ENCODE measurements at regions of chr2 and their contacts with region 1.

Region 1: GRCh38 chr2:218395797-218396687 is 3.6 kb upstream of the CTDSP1 start:
- DNase-seq: peak; percentile 91 to 98 (median 96)
- ATAC-seq: peak; percentile 83
- H3K4me3 ChIP-seq: peak overlapping the region; percentile 71
- H3K4me3 Mint-ChIP-seq: peak overlapping the region; percentile 85 to 99 (median 94)
- H3K27ac ChIP-seq: peak overlapping the region; percentile 86
- H3K27ac Mint-ChIP-seq: peak overlapping the region; percentile 96 to 100 (median 97)
- H3K4me1 ChIP-seq: peaks cover 29 to 31% of the 10 kb centered on the region in 2 donors
- H3K4me1 Mint-ChIP-seq: peaks cover 16 to 41% (median 39%) of the 10 kb centered on the region in 7 donors
- H3K27me3 ChIP-seq: no peaks in the 10 kb centered on the region
- H3K27me3 Mint-ChIP-seq: no peaks in the 10 kb centered on the region

Region 2: DNA sequence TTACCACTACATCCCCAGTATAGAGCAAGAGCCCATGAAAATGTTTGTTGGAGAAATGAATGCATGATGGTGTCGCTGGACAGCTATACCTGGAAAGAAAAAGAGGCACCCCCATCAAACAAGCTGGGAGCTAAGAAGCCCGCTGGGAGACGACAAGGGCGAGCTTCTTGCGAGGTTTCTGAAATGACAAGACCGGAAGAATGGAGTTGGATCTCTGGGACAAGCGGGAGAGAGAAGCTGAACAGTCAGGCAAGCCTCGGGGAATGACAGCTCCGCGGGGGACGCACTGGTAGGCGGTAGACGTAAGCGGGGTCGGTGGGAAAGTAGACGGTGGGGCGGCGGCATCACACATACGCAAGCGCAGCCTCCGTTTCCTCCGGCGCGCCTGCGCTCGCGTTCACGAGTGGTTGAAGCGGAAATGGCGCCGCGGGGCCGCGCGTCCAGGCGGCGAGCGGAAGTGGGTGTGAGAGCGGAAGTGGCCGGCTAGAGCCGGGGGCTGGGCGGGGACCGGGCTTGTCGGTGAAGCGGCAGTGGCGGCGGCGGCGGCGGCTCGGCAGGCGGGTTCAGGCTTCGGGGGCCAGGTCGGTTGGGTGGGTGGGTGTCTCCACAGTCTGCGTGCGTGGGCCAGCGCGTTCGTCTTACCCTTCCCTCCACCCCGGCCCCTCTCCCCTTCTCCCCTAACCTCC is 179.2 kb before region 1 on chr2 and contains the start of gene ARPC2:
- CTCF ChIA-PET with region 1: no interaction called
- POLR2A ChIA-PET with region 1: interaction called, 9 read pairs
- intact Hi-C with region 1: loop called (anchors 1 kb)
- DNase-seq: peak; percentile 91 to 97 (median 95)
- ATAC-seq: peak; percentile 90
- H3K4me3 ChIP-seq: peak within 1 kb of the TSS; percentile 90
- H3K4me3 Mint-ChIP-seq: peak within 1 kb of the TSS; percentile 90 to 97 (median 94)
- H3K27ac ChIP-seq: peak within 1 kb of the TSS; percentile 99
- H3K27ac Mint-ChIP-seq: peak within 1 kb of the TSS; percentile 94 to 98 (median 97)
- H3K4me1 ChIP-seq: peaks cover 25 to 33% of the 10 kb centered on the region in 2 donors
- H3K4me1 Mint-ChIP-seq: peaks cover 31 to 48% (median 42%) of the 10 kb centered on the region in 7 donors
- H3K27me3 ChIP-seq: no peaks in the 10 kb centered on the region
- H3K27me3 Mint-ChIP-seq: peaks cover 0 to 6% (median 0%) of the 10 kb centered on the region in 5 donors
- total RNA-seq, gene ARPC2: 330 to 694 (median 368) TPM

Region 3: GRCh38 chr2:218301176-218301819 is 94.7 kb before region 1 on chr2:
- CTCF ChIA-PET with region 1: interaction called, 10 read pairs
- POLR2A ChIA-PET with region 1: interaction called, 15 read pairs
- intact Hi-C with region 1: loop called (anchors 1 kb)
- DNase-seq: peak; percentile 61 to 92 (median 84)
- ATAC-seq: peak; percentile 99
- H3K4me3 ChIP-seq: no peak overlapping the region
- H3K4me3 Mint-ChIP-seq: no peak overlapping the region
- H3K27ac ChIP-seq: no peak overlapping the region
- H3K27ac Mint-ChIP-seq: peak overlapping the region in 8 of 9 donors; percentile 34 to 80 (median 64)
- H3K4me1 ChIP-seq: no peaks in the 10 kb centered on the region
- H3K4me1 Mint-ChIP-seq: peaks cover 3 to 8% (median 7%) of the 10 kb centered on the region in 7 donors
- H3K27me3 ChIP-seq: no peaks in the 10 kb centered on the region
- H3K27me3 Mint-ChIP-seq: peaks cover 0 to 4% (median 0%) of the 10 kb centered on the region in 5 donors

Region 4: DNA sequence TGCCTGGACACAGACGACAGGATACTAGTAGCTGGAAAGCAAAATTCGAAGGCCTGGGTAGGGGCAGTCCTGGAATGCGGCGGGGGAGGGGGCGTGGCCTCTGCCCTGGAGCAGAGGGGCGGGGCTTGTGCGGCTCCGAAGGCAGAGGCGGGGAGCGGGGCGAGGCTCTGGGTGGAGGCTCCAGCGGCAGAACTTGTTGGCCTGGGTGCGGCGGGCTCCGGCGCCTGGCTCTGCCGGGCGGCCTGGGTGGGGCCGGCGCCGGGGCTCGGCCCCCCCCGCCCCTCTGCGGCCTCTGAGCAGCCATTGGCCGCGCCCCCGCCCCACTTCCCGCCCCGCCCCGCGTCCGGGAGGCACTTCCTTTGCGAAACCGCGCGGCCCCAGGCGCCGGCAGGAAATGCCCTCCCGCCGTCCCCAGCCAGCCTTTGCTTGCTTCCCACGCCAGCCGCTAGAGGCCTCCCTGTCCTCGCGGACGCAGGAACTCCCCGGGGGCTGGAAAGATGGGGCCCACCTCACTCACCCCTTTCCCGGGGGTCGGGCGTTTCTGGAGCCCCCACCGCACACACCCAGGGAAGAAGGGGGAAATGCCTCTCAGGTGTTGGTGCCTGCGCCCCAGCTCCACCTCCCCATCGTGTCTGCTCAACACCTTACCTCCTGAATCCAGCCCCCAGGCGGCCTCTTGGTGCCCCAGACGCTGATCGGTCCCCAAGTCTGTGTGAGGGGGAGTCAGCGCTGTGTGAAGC is 10.3 kb after region 1 on chr2:
- CTCF ChIA-PET with region 1: interaction called, 11 read pairs
- POLR2A ChIA-PET with region 1: interaction called, 36 read pairs
- intact Hi-C with region 1: loop called (anchors 1 kb)
- DNase-seq: peak; percentile 75 to 94 (median 85)
- ATAC-seq: peak; percentile 81
- H3K4me3 ChIP-seq: peak overlapping the region; percentile 56
- H3K4me3 Mint-ChIP-seq: peak overlapping the region; percentile 77 to 95 (median 88)
- H3K27ac ChIP-seq: peak overlapping the region; percentile 75
- H3K27ac Mint-ChIP-seq: peak overlapping the region; percentile 83 to 95 (median 91)
- H3K4me1 ChIP-seq: peaks cover 23 to 32% of the 10 kb centered on the region in 2 donors
- H3K4me1 Mint-ChIP-seq: peaks cover 31 to 62% (median 53%) of the 10 kb centered on the region in 7 donors
- H3K27me3 ChIP-seq: no peaks in the 10 kb centered on the region
- H3K27me3 Mint-ChIP-seq: peaks cover 0 to 3% (median 0%) of the 10 kb centered on the region in 5 donors

Region 5: GRCh38 chr2:218659258-218659987 is 263.4 kb after region 1 on chr2 and contains the starts of genes BCS1L and ZNF142:
- CTCF ChIA-PET with region 1: interaction called, 3 read pairs
- POLR2A ChIA-PET with region 1: interaction called, 4 read pairs
- intact Hi-C with region 1: loop called (anchors 1 kb)
- DNase-seq: peak; percentile 75 to 95 (median 90)
- ATAC-seq: peak; percentile 99
- H3K4me3 ChIP-seq: peak within 1 kb of the TSS; percentile 83
- H3K4me3 Mint-ChIP-seq: peak within 1 kb of the TSS; percentile 90 to 99 (median 98)
- H3K27ac ChIP-seq: peak within 1 kb of the TSS; percentile 80
- H3K27ac Mint-ChIP-seq: peak within 1 kb of the TSS; percentile 74 to 96 (median 93)
- H3K4me1 ChIP-seq: peaks cover 7 to 15% of the 10 kb centered on the region in 2 donors
- H3K4me1 Mint-ChIP-seq: peaks cover 25 to 45% (median 38%) of the 10 kb centered on the region in 7 donors
- H3K27me3 ChIP-seq: no peaks in the 10 kb centered on the region
- H3K27me3 Mint-ChIP-seq: no peaks in the 10 kb centered on the region
- total RNA-seq, gene BCS1L: 21.4 to 62.0 (median 49.0) TPM
- total RNA-seq, gene ZNF142: 38.7 to 49.8 (median 40.8) TPM

Region 6: GRCh38 chr2:218898109-218898878 is 502.3 kb after region 1 on chr2:
- CTCF ChIA-PET with region 1: no interaction called
- POLR2A ChIA-PET with region 1: no interaction called
- intact Hi-C with region 1: loop called (anchors 2 kb)
- DNase-seq: peak; percentile 50 to 88 (median 72)
- ATAC-seq: peak; percentile 42
- H3K4me3 ChIP-seq: peak overlapping the region; percentile 65
- H3K4me3 Mint-ChIP-seq: peak overlapping the region; percentile 53 to 87 (median 82)
- H3K27ac ChIP-seq: no peak overlapping the region
- H3K27ac Mint-ChIP-seq: peak overlapping the region in 7 of 9 donors; percentile 33 to 92 (median 71)
- H3K4me1 ChIP-seq: peaks cover 40 to 49% of the 10 kb centered on the region in 2 donors
- H3K4me1 Mint-ChIP-seq: peaks cover 38 to 48% (median 42%) of the 10 kb centered on the region in 7 donors
- H3K27me3 ChIP-seq: peaks cover 0 to 3% of the 10 kb centered on the region in 2 donors
- H3K27me3 Mint-ChIP-seq: peaks cover 20 to 75% (median 40%) of the 10 kb centered on the region in 5 donors

Region 7: DNA sequence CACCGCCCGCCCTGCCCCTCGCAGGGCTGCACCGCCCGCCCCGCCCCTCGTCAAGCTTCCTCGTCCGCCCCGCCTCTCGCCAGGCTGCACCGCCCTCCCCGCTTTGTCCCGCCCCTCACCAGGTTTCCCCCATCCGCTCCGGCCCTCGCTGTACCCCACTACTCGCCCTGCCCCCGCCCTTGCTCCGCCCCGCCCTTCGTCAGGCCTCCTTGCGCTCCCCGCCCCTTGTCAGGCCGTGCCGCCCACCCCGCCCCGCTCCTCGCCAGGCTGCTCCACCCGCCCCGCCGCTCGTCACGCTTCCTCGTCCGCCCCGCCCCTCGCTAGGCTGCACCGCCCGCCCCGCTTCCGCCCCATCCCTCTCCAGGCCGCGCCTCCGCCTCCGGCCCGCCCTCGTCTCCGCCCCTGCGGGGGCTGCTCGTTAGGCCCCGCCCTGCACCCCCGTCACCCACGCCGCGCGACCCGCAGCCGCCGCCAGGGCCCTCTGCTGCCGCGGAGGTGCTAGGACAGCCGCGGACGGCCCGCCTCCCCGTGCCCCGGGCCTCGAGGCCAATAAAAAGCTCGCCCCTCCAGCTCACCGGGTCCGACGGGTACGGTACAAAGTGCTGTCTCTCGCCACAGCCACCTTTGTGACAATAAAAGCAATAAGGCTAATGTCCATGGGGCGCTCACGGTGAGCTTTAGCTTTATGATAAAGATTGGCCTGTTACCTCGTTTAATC is 992.2 kb after region 1 on chr2:
- CTCF ChIA-PET with region 1: no interaction called
- POLR2A ChIA-PET with region 1: no interaction called
- intact Hi-C with region 1: loop called (anchors 2 to 5 kb)
- DNase-seq: peak; percentile 97 to 100 (median 98)
- ATAC-seq: peak; percentile 87
- H3K4me3 ChIP-seq: peak overlapping the region; percentile 38
- H3K4me3 Mint-ChIP-seq: peak overlapping the region; percentile 64 to 97 (median 90)
- H3K27ac ChIP-seq: peak overlapping the region; percentile 78
- H3K27ac Mint-ChIP-seq: peak overlapping the region; percentile 73 to 98 (median 91)
- H3K4me1 ChIP-seq: peaks cover 17 to 22% of the 10 kb centered on the region in 2 donors
- H3K4me1 Mint-ChIP-seq: peaks cover 2 to 37% (median 32%) of the 10 kb centered on the region in 7 donors
- H3K27me3 ChIP-seq: no peaks in the 10 kb centered on the region
- H3K27me3 Mint-ChIP-seq: peaks cover 0 to 11% (median 0%) of the 10 kb centered on the region in 5 donors